Mucosa of descending colon (tissue), 3 donors: ENCODE measurements at regions of chr1 and their contacts with region 1.

Region 1: GRCh38 chr1:29245876-29246275 is 9.6 kb downstream of the PTPRU start:
- DNase-seq: peak in 2 of 3 donors; percentile 62 to 69
- ATAC-seq: peak; percentile 74
- H3K4me3 ChIP-seq: no peak overlapping the region
- H3K4me1 ChIP-seq: no peaks in the 10 kb centered on the region
- CTCF ChIP-seq: peak; percentile 46

Region 2: GRCh38 chr1:29202584-29203340 is 43.1 kb before region 1 on chr1:
- intact Hi-C with region 1: no loop called
- DNase-seq: peak; percentile 90 to 99 (median 94)
- ATAC-seq: peak; percentile 99
- H3K4me3 ChIP-seq: no peak overlapping the region
- H3K4me1 ChIP-seq: peaks cover 10% of the 10 kb centered on the region
- CTCF ChIP-seq: peak; percentile 91

Region 3: DNA sequence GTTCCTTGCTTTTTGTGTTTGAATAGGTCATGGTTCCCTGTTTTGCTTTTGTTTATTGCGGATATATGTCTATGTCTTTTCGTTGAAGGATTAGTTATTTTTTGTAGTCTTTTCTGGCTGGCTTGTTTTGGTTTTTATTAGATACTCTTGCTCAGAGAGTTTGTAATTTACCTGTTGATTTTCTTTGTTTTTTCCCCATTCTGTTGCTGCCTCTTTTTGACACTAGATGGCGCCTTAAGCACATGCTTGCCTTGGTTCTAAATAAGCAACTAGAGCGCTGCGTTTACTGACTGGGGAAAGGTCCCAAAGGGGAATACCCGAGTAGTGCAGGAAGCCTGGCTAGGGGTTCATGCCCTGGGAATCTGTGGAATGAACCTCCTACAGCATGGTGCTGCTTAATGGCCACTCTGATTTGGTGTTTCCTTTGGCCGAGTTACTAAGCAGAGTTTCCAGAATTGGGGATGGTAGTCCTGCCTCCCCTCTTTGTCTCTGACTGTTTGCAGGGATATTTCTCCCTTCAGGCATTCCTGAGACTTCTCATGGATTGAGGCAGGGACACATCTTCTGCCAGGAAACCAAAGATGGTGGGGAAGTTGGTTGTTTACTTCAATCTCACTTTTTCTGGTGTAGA is 133.7 kb after region 1 on chr1:
- intact Hi-C with region 1: no loop called
- DNase-seq: peak in 1 of 3 donors; percentile 8
- ATAC-seq: no peak
- H3K4me3 ChIP-seq: no peak overlapping the region
- H3K4me1 ChIP-seq: no peaks in the 10 kb centered on the region
- CTCF ChIP-seq: no peak

Region 4: DNA sequence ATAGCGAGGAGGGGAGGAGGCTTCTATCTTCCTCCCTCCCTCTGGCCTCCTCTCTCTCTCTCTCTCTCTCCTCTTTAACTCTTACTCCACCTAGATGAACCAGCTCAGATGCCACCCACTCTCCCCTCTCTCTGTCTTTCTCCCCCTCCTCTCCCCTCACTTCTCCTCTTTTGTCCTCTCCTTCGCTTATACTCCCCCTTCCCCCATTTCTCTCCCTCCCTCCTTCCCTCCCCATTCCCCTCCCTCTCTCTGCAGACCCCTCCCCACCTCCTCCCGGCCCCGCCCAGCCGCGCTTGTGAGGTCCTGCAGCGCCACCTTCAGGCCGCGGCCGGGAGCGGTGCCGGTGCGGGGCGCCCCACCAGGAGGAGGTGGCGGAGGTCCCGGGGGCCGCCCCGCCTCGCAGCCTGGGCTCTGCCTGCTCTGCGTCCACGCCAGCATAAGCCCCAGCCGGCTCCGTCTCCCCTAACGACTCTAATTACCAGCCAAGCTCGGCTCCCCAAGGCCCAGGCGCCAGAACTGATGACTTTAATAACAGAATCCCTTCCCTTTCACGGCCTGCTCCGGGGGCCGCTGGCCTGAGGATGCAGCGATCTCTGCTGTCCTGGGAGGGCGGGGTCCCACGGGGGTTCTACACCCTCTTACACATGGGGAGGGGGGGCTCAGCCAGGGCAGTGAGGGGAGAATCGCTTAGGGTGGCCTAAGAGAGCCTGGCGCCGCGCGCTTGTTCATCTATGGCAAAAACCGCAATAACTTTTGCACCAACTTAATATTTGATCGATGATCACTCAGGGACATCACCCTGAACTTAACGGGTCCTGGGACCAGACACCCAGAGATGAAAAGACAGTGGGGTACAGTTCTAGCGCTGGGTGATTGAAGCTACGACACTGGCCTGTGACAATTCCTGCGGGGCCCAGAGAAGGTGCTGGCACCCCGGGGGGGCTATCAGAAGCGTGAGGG is 840.2 kb after region 1 on chr1:
- intact Hi-C with region 1: loop called in 1 of 2 experiments (anchors 10 kb)
- DNase-seq: peak in 2 of 3 donors; percentile 59 to 61
- ATAC-seq: no peak
- H3K4me3 ChIP-seq: no peak overlapping the region
- H3K4me1 ChIP-seq: peaks cover 13% of the 10 kb centered on the region
- CTCF ChIP-seq: peak; percentile 36